Mammary epithelial cell (primary cell): ENCODE measurements at regions of chr11 and their contacts with region 1.

Region 1: GRCh38 chr11:83235825-83236224 is 42.3 kb downstream of the ANKRD42 start:
- DNase-seq: no peak
- H3K4me3 ChIP-seq: no peak overlapping the region
- H3K27ac ChIP-seq: no peak overlapping the region
- H3K4me1 ChIP-seq: no peaks in the 10 kb centered on the region
- H3K27me3 ChIP-seq: no peaks in the 10 kb centered on the region
- CTCF ChIP-seq: no peak

Region 2: GRCh38 chr11:81658722-81659121 is 1577.1 kb before region 1 on chr11:
- CTCF ChIA-PET with region 1: interaction called, 10 read pairs
- dilution Hi-C with region 1: no loop called
- in situ Hi-C with region 1: no loop called
- intact Hi-C with region 1: no loop called
- DNase-seq: peak; percentile 25
- H3K4me3 ChIP-seq: no peak overlapping the region
- H3K27ac ChIP-seq: no peak overlapping the region
- H3K4me1 ChIP-seq: no peaks in the 10 kb centered on the region
- H3K27me3 ChIP-seq: peaks cover 3% of the 10 kb centered on the region
- CTCF ChIP-seq: peak; percentile 63 to 83

Region 3: GRCh38 chr11:83200035-83200434 is 35.8 kb before region 1 on chr11:
- CTCF ChIA-PET with region 1: no interaction called
- dilution Hi-C with region 1: no loop called
- in situ Hi-C with region 1: no loop called
- intact Hi-C with region 1: no loop called
- DNase-seq: no peak
- H3K4me3 ChIP-seq: no peak overlapping the region
- H3K27ac ChIP-seq: no peak overlapping the region
- H3K4me1 ChIP-seq: peaks cover 11% of the 10 kb centered on the region
- H3K27me3 ChIP-seq: no peaks in the 10 kb centered on the region
- CTCF ChIP-seq: no peak